Upper lobe of right lung (tissue), 1 donor: ENCODE measurements at regions of chr9 and their contacts with region 1.

Region 1: GRCh38 chr9:93549611-93550010 is 26.8 kb upstream of the PHF2 start:
- DNase-seq: no peak
- ATAC-seq: no peak
- H3K4me3 ChIP-seq: no peak overlapping the region
- H3K27ac ChIP-seq: no peak overlapping the region
- H3K4me1 ChIP-seq: no peaks in the 10 kb centered on the region
- H3K27me3 ChIP-seq: no peaks in the 10 kb centered on the region
- CTCF ChIP-seq: no peak

Region 2: GRCh38 chr9:93444301-93444700 is 105.3 kb before region 1 on chr9:
- intact Hi-C with region 1: loop called (anchors 10 kb)
- DNase-seq: no peak
- ATAC-seq: no peak
- H3K4me3 ChIP-seq: no peak overlapping the region
- H3K27ac ChIP-seq: no peak overlapping the region
- H3K4me1 ChIP-seq: peaks cover 7% of the 10 kb centered on the region
- H3K27me3 ChIP-seq: no peaks in the 10 kb centered on the region
- CTCF ChIP-seq: no peak